ENCODE measurements at regions of chr22 and their contacts with region 1.

Region 1: DNA sequence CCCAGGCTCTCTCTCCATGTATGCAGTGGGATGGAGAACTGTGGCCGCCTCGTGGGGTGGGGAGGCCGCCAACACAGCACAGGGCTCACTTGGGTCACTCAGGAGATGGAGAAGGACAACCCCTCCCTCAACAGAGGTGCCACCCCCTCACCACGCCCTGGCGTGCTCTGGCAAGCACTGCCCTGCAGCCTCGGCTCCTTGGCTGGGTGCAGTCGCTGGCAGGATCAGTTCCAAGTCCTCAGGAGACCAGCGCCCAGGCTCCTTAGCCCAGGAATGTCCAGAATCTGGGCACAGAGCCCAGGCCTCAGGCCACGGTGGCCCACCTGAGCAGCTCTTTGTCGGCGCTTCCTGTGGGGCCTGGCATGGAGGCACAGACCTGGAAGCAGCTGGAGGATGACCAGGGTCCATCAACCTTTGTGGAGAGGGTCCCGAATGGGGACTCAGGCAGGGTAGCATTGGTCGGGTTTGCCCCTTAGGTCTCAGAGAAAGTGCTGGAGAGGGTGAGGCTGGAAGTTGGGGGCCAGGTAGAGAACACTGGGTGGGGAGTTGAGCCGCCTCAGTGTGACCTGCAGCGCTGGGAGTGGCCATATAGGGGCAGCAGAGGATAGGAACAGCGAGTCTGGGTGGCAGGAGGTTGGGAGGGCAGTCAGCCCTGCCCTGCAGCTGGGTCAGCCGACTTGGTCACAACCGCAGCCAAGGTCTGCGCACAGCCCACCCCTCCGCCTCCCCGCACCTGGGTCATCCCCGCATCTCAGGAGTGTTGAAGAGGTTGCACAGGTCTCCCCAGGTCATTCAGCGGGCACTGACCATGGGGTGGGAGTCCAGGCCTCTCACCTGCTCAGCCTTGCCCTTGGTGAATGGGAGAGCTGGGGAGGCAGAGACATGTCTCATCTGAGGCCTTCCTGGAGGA is 8.2 kb downstream of the SUSD2 start:
- DNase-seq: no peak
- H3K4me3 ChIP-seq: no peak overlapping the region
- H3K27ac ChIP-seq: peak overlapping the region in 1 of 2 donors; percentile 8
- H3K4me1 ChIP-seq: peaks cover 4 to 10% of the 10 kb centered on the region in 2 donors
- H3K27me3 ChIP-seq: no peaks in the 10 kb centered on the region
- CTCF ChIP-seq: peak; percentile 92 to 98 (median 94)

Region 2: DNA sequence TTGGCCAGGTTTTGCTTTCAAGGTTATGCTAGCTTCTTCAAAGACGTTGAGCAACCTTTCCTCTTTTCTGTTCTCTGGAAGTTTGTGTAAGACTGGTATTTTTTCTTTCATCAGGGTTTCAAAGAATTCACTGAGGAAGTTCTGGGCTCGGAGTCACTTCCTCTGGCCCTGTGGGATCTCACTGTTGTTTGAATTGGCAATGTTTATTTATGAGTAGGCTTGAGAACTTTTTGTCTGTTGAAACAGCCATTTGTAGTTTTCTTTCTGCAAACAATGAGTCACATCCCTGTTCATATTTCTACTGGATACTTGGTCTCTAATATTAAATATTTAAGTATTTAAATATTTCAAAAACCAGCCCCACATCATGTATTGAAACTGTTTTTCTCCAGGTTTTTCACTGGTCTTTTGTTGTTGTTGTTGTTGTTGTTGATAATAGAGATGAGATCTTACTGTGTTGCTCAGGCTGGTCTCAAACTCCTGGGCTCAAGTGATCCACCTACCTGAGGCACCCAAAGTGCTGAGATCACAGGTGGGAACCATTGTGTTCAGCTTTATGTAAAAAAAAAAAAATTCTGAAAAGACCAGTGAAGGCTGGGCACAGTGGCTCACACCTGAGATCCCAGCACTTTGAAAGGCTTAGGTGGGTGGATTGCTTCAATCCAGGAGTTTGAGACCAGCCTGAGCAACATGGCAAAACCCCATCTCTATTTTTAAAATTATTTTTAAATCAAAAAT is 18.7 kb after region 1 on chr22:
- intact Hi-C with region 1: loop called (anchors 2 kb)
- DNase-seq: peak in 1 of 2 donors; percentile 89
- H3K4me3 ChIP-seq: no peak overlapping the region
- H3K27ac ChIP-seq: peak overlapping the region; percentile 74 to 87
- H3K4me1 ChIP-seq: peaks cover 10 to 25% of the 10 kb centered on the region in 2 donors
- H3K27me3 ChIP-seq: no peaks in the 10 kb centered on the region
- CTCF ChIP-seq: no peak

Region 3: DNA sequence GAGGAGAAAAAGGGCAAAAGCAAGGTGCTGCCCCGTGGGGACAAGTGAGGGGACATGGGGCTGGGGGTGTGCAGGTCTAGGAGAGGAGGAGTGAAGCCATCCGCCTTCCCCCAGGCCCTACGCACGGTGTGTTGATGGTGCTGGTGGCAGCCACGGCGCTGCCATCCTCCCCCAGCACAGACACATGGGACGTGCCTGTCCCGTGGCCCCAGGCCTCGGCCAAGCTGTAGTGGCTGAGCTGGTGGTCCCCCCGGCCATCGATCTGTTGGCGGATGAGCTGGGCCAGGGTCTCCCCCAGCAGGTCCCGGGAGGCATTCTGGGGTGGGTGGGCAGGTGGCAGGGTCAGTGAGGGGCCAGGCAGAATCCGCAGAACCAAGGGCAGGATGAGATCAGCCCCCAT is 36.4 kb after region 1 on chr22:
- intact Hi-C with region 1: loop called (anchors 2 kb)
- DNase-seq: no peak
- H3K4me3 ChIP-seq: no peak overlapping the region
- H3K27ac ChIP-seq: no peak overlapping the region
- H3K4me1 ChIP-seq: no peaks in the 10 kb centered on the region
- H3K27me3 ChIP-seq: no peaks in the 10 kb centered on the region
- CTCF ChIP-seq: no peak

Region 4: GRCh38 chr22:24244101-24244787 is 54.7 kb after region 1 on chr22:
- intact Hi-C with region 1: loop called (anchors 1 kb)
- DNase-seq: no peak
- H3K4me3 ChIP-seq: peak overlapping the region; percentile 11 to 30
- H3K27ac ChIP-seq: peak overlapping the region; percentile 92 to 93
- H3K4me1 ChIP-seq: peaks cover 18 to 34% of the 10 kb centered on the region in 2 donors
- H3K27me3 ChIP-seq: no peaks in the 10 kb centered on the region
- CTCF ChIP-seq: no peak

Region 5: DNA sequence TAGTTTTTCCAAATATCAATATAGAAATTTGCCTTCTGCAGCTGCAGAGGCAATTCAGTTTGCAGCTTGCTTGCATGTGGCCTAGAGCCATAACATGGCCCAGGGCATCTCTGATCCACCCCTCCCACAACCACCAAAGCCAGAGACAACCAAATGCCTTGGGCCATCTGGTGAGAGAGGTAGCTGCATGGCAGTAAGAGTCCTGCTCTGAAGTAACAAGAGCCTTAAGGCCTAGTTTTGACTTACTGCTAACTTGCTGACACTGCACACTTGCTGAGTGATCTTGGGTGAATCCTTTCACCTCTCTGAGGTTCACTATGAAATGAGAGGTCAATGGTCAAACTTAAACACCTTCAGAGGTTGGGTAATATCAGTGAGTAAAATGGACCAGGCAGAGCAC is 76.2 kb after region 1 on chr22:
- intact Hi-C with region 1: no loop called
- DNase-seq: no peak
- H3K4me3 ChIP-seq: no peak overlapping the region
- H3K27ac ChIP-seq: no peak overlapping the region
- H3K4me1 ChIP-seq: no peaks in the 10 kb centered on the region
- H3K27me3 ChIP-seq: no peaks in the 10 kb centered on the region
- CTCF ChIP-seq: no peak

Measured in ascending aorta (tissue), 2 donors.